ENCODE measurements at regions of chr3 and their contacts with region 1.

Region 1: DNA sequence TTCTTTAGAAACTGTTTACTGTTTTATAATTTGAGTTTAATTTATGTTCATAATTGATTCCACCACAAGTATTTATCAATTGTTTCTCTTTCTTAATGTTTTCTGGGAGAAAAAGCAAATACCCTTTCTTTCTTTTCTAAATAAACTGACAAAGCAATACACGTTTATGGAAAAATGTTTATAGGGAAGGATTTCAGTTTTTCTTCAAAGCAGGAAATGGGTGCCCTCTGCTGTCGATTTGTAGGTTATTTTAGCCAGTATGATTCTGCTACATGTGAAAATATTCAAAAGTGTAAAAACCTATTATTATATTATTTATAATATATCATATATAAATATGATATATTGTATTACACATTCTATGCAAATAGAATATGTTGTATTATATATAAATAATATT is 921.0 kb upstream of the ROBO1 start:
- DNase-seq: no peak
- ATAC-seq: no peak
- H3K4me3 ChIP-seq: no peak overlapping the region
- H3K27ac ChIP-seq: no peak overlapping the region
- H3K4me1 ChIP-seq: no peaks in the 10 kb centered on the region
- H3K27me3 ChIP-seq: no peaks in the 10 kb centered on the region
- CTCF ChIP-seq: peak; percentile 29; the same call in 1 of the 2 replicates

Region 2: DNA sequence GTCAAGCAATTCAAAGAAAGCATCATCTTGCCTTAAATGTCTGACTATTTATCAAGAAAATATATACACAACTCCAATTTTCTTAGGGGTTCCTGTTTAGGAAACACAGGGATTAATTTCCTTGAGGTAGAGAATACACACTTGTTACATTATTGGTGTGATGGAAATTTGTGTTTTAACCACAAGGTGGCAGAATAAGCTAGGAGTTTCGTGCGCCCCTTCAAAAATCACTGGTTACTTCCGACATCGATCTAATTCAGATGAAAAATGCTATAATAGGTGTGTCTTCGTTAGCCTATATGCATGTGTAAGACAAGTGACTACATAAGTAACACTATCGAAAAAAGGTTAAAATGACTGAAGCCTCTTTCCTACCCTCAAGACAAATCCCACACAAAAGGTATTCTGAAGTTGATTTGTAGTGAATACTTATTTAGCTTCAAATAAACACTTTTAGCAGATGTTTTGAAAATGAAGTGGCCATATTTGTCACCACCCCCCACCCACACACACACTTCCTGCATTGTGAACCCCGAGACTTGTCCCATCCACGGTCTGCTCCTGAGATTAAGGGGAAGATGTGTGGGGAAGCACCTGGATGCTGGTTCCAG is 1167.5 kb before region 1 on chr3:
- CTCF ChIA-PET with region 1: no interaction called
- POLR2A ChIA-PET with region 1: no interaction called
- in situ Hi-C with region 1: no loop called
- intact Hi-C with region 1: loop called (anchors 5 kb)
- DNase-seq: peak; percentile 51
- ATAC-seq: peak; percentile 71; the same call in 1 of the 2 replicates
- H3K4me3 ChIP-seq: no peak overlapping the region
- H3K27ac ChIP-seq: peak overlapping the region; percentile 34; the same call in 1 of the 2 replicates
- H3K4me1 ChIP-seq: no peaks in the 10 kb centered on the region
- H3K27me3 ChIP-seq: no peaks in the 10 kb centered on the region
- CTCF ChIP-seq: peak; percentile 48; the same call in 1 of the 2 replicates

Measured in Panc1 (cell line).